A549 (cell line): ENCODE measurements at regions of chr10 and their contacts with region 1.

Region 1: DNA sequence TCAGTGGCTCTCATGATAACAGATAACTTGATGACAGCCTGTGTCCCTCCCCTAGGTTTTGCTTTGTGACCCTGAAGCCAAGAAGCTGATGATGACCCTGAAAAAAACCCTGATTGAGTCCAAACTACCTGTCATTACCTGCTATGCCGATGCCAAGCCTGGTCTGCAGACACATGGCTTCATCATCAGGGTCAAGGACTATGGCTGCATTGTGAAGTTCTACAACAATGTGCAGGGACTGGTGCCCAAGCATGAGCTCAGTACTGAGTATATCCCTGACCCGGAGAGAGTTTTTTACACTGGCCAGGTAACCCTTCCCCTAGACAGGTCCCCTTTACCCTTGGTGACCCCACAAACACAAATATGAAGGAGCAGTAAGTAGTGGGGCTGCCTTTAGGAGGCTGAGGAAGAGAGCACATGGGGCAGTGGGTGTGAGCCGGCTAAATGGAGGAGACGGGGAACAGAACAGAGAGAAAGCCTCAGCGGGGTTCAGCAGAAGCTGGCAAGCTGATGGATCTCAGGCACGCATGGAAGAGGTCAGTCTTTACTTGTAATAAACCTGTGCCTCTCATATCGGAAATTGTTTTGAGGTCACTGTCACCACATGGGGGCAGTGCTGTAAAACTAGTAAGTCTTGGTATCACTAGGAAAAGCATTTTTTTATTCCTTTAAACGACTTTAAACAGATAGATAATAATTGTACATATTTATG is 20.2 kb downstream of the PDCD11 start:
- DNase-seq: peak; percentile 44 to 70
- ATAC-seq: peak; percentile 78 to 85; a peak in 4 of 6 replicates
- H3K4me3 ChIP-seq: no peak overlapping the region
- H3K27ac ChIP-seq: no peak overlapping the region
- H3K4me1 ChIP-seq: no peaks in the 10 kb centered on the region
- CTCF ChIP-seq: peak; percentile 74
- EP300 ChIP-seq: no peak
- POLR2A ChIP-seq: no peak
- RAD21 ChIP-seq: peak; percentile 64 to 70

Region 2: GRCh38 chr10:103396064-103396788 is 20.4 kb before region 1 on chr10 and contains the starts of genes ATP5MK and PDCD11:
- CTCF ChIA-PET with region 1: interaction called, 10 read pairs
- POLR2A ChIA-PET with region 1: no interaction called
- DNase-seq: peak; percentile 97 to 98
- ATAC-seq: peak; percentile 100
- H3K4me3 ChIP-seq: peak within 1 kb of the TSS; percentile 88
- H3K27ac ChIP-seq: peak within 1 kb of the TSS; percentile 90 to 96
- H3K4me1 ChIP-seq: peaks cover 28% of the 10 kb centered on the region
- CTCF ChIP-seq: no peak
- EP300 ChIP-seq: no peak
- POLR2A ChIP-seq: peak; percentile 94
- RAD21 ChIP-seq: no peak
- polyA plus RNA-seq, gene ATP5MK: 492 and 504 TPM in 2 replicates
- polyA plus RNA-seq, gene PDCD11: 32.6 and 37.5 TPM in 2 replicates

Region 3: DNA sequence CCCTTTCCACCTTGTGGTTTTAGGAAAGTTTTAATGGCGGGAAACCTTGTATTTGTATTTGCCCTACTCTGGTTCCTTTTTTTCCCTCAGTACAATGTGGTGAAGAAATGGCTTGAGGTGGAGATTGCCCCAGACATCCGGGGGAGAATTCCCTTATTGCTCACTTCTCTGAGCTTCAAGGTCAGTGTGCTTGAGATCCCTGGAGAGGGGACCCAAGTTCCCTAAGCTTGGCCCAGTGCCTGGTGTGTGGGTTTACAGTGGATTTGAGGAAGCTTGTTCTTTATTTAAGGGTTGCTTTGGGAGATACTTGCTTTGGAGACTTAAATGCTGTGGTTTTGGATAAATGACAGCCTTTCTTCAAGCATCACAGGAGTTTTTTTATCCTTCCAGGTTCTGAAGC is 17.3 kb after region 1 on chr10:
- CTCF ChIA-PET with region 1: interaction called, 24 read pairs
- POLR2A ChIA-PET with region 1: no interaction called
- DNase-seq: no peak
- ATAC-seq: no peak
- H3K4me3 ChIP-seq: no peak overlapping the region
- H3K27ac ChIP-seq: no peak overlapping the region
- H3K4me1 ChIP-seq: peaks cover 7% of the 10 kb centered on the region; the same call in 2 of the 3 replicates
- CTCF ChIP-seq: no peak
- EP300 ChIP-seq: no peak
- POLR2A ChIP-seq: no peak
- RAD21 ChIP-seq: no peak

Region 4: DNA sequence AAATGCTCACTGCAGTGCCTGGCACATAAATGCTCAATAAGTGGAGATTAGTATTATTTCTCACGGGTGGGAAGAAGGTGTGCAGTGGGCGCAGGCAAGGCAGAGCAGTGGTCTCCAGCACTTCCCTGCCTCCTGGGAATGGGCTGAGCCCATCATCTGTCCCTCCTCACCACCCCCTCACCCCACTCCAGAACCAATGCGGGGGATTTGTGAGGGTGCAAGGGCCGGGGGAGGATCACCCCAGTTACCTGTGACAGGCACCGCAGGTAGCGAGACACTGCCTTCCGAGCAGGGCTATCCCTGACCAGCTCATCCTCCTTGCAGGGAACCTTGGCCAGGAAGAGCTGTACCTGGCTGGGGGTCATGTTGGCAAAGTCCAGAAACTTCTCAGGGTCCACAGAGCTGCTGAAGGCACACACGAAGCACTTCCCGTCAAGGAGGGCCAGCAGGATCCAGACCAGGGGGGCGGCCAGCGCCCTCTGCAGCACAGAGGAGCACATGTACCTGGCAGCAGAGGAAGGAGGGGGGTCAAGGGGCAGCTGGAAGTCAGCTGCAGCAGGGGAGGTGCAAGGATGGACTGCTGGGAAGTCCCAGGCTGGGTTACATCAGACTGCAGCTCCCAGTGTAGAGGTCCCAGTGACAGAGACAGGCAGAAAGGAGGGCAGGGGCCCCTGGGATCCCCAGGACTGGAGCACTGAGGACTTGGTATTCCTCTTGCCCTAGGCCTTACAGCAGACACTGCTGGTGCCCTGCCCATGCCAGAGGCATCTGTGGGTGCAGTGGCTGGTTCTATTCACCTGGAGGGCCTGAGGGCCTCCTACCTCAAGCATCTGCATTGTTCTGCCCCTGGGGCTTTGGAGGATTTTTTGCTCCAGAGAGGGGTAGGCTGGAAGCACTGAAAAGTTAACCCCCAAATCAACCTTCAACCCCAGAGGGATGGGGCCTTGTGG is 59.7 kb after region 1 on chr10:
- CTCF ChIA-PET with region 1: interaction called, 17 read pairs
- POLR2A ChIA-PET with region 1: no interaction called
- DNase-seq: peak in 1 of 2 experiments; percentile 39
- ATAC-seq: peak; percentile 58 to 77
- H3K4me3 ChIP-seq: no peak overlapping the region
- H3K27ac ChIP-seq: no peak overlapping the region
- H3K4me1 ChIP-seq: peaks cover 26% of the 10 kb centered on the region
- CTCF ChIP-seq: no peak
- EP300 ChIP-seq: no peak
- POLR2A ChIP-seq: no peak
- RAD21 ChIP-seq: no peak

Region 5: GRCh38 chr10:103491493-103492381 is 75.1 kb after region 1 on chr10:
- CTCF ChIA-PET with region 1: interaction called, 32 read pairs
- POLR2A ChIA-PET with region 1: no interaction called
- DNase-seq: peak; percentile 68 to 77
- ATAC-seq: peak; percentile 69 to 74
- H3K4me3 ChIP-seq: no peak overlapping the region
- H3K27ac ChIP-seq: no peak overlapping the region
- H3K4me1 ChIP-seq: peaks cover 13% of the 10 kb centered on the region
- CTCF ChIP-seq: no peak
- EP300 ChIP-seq: no peak
- POLR2A ChIP-seq: no peak
- RAD21 ChIP-seq: no peak

Region 6: DNA sequence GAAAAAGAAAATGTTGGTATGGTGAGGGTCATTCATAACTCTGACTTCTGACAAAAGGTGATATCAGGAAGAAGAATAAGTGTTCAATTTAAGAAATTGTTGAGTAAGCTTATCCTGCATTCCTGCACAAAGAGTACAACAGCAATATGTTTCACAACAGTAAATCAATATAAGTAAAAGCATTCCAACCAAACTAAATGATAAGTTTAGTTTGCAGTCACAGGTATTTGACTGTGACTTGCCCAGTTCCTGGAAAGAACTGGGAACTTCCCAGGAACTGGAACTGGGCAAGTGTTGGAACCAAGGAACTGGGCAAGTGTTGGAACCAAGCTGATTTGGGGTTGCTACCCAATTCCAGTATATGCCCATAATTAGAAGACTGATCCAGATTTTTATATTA is 112.0 kb after region 1 on chr10:
- CTCF ChIA-PET with region 1: no interaction called
- POLR2A ChIA-PET with region 1: no interaction called
- DNase-seq: no peak
- ATAC-seq: no peak
- H3K4me3 ChIP-seq: no peak overlapping the region
- H3K27ac ChIP-seq: peak overlapping the region in 1 of 2 experiments; percentile 59; a peak in 1 of 6 replicates
- H3K4me1 ChIP-seq: peaks cover 20% of the 10 kb centered on the region
- CTCF ChIP-seq: no peak
- EP300 ChIP-seq: no peak
- POLR2A ChIP-seq: no peak
- RAD21 ChIP-seq: no peak